ENCODE measurements at regions of chr1 and their contacts with region 1.

Region 1: DNA sequence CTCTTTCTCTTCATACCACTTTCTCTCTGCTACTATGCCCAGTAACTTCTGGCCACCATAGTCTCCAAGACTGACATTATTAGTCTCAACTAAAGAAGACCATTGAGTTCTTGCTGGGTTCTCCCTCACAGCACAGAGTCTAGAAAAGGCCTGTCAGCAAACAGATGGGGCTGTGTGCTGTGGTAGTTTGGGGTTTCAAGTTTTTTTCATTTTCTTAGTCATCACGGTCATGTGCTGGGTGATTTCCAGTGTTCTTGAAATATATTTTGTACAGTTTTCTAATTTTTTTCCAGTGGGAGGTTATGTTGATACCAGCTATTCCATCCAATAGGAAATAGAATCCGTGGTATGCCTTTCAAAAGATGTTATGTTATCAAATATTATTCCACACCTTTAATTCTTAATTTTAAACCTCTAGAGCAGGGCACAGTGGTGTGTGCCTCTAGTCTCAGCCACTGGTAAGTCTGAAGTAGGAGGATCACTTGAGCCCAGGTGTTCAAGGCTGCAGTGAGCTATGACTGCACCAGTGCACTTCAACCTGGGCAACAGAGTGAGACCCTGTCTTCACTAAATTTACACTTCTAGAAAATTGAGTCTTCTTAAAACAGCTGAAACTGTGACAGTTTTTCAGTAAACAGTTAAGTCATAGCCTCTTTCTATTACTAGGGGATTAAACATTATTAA is 8.3 kb downstream of the CFHR2 start:
- DNase-seq: no peak
- H3K4me3 Mint-ChIP-seq: no peak overlapping the region
- H3K27ac Mint-ChIP-seq: no peak overlapping the region
- H3K4me1 Mint-ChIP-seq: no peaks in the 10 kb centered on the region
- H3K27me3 Mint-ChIP-seq: no peaks in the 10 kb centered on the region
- CTCF ChIP-seq: no peak

Region 2: DNA sequence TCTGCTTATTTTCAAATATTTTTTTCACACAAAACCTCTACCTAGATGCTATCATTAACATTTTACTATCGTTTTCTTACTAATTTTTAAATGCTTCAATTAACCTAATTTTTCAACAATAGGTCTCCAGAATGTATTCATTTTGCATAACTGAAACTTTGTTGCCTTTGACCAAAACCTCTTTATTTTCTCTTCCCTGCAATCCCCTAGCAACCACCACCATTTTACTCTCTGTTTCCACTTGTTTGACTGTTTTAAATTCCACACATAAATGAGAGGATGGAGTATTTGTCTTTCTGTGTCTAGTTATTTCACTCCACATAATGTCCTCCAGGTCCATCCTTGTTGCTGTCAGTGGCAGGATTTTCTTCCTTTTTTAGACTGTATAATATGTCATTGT is 124.7 kb after region 1 on chr1:
- CTCF ChIA-PET with region 1: no interaction called
- intact Hi-C with region 1: loop called (anchors 5 kb)
- DNase-seq: no peak
- H3K4me3 Mint-ChIP-seq: no peak overlapping the region
- H3K27ac Mint-ChIP-seq: no peak overlapping the region
- H3K4me1 Mint-ChIP-seq: no peaks in the 10 kb centered on the region
- H3K27me3 Mint-ChIP-seq: no peaks in the 10 kb centered on the region
- CTCF ChIP-seq: no peak